Panc1 (cell line): ENCODE measurements at regions of chrX and their contacts with region 1.

Region 1: GRCh38 chrX:85544609-85545008 is 165.1 kb upstream of the POF1B start:
- DNase-seq: no peak
- ATAC-seq: no peak
- H3K4me3 ChIP-seq: no peak overlapping the region
- H3K27ac ChIP-seq: no peak overlapping the region
- H3K4me1 ChIP-seq: no peaks in the 10 kb centered on the region
- H3K27me3 ChIP-seq: no peaks in the 10 kb centered on the region
- CTCF ChIP-seq: peak; percentile 40; the same call in 1 of the 2 replicates

Region 2: GRCh38 chrX:85111347-85111746 is 433.3 kb before region 1 on chrX:
- CTCF ChIA-PET with region 1: no interaction called
- POLR2A ChIA-PET with region 1: no interaction called
- in situ Hi-C with region 1: no loop called
- intact Hi-C with region 1: loop called (anchors 2 kb)
- DNase-seq: no peak
- ATAC-seq: no peak
- H3K4me3 ChIP-seq: no peak overlapping the region
- H3K27ac ChIP-seq: no peak overlapping the region
- H3K4me1 ChIP-seq: no peaks in the 10 kb centered on the region
- H3K27me3 ChIP-seq: no peaks in the 10 kb centered on the region
- CTCF ChIP-seq: peak; percentile 71; the same call in 1 of the 2 replicates